Panc1 (cell line): ENCODE measurements at regions of chr16 and their contacts with region 1.

Region 1: GRCh38 chr16:84754353-84754856 is 54.6 kb downstream of the USP10 start:
- DNase-seq: no peak
- ATAC-seq: peak; percentile 94
- H3K4me3 ChIP-seq: no peak overlapping the region
- H3K27ac ChIP-seq: peak overlapping the region; percentile 29; the same call in 1 of the 2 replicates
- H3K4me1 ChIP-seq: peaks cover 15% of the 10 kb centered on the region
- H3K27me3 ChIP-seq: no peaks in the 10 kb centered on the region
- CTCF ChIP-seq: peak; percentile 80

Region 2: GRCh38 chr16:84599521-84600202 is 154.7 kb before region 1 on chr16:
- CTCF ChIA-PET with region 1: no interaction called
- POLR2A ChIA-PET with region 1: no interaction called
- in situ Hi-C with region 1: no loop called
- intact Hi-C with region 1: no loop called
- DNase-seq: no peak
- ATAC-seq: 0 out of 2 replicates have a peak, but pooled peaks have one; percentile 4
- H3K4me3 ChIP-seq: peak overlapping the region in 1 of 2 experiments; percentile 11; a peak in 1 of 4 replicates
- H3K27ac ChIP-seq: peak overlapping the region; percentile 68
- H3K4me1 ChIP-seq: peaks cover 46% of the 10 kb centered on the region
- H3K27me3 ChIP-seq: no peaks in the 10 kb centered on the region
- CTCF ChIP-seq: no peak

Region 3: GRCh38 chr16:84647828-84648594 is 106.4 kb before region 1 on chr16 and contains the start of gene KLHL36:
- CTCF ChIA-PET with region 1: no interaction called
- POLR2A ChIA-PET with region 1: interaction called, 12 read pairs
- in situ Hi-C with region 1: no loop called
- intact Hi-C with region 1: no loop called
- DNase-seq: no peak
- ATAC-seq: peak; percentile 95
- H3K4me3 ChIP-seq: peak within 1 kb of the TSS; percentile 64 to 67
- H3K27ac ChIP-seq: peak within 1 kb of the TSS; percentile 63
- H3K4me1 ChIP-seq: peaks cover 7% of the 10 kb centered on the region
- H3K27me3 ChIP-seq: no peaks in the 10 kb centered on the region
- CTCF ChIP-seq: no peak
- total RNA-seq, gene KLHL36: 46.0 TPM

Region 4: GRCh38 chr16:84712138-84712671 is 42.2 kb before region 1 on chr16:
- CTCF ChIA-PET with region 1: interaction called, 10 read pairs
- POLR2A ChIA-PET with region 1: no interaction called
- in situ Hi-C with region 1: no loop called
- intact Hi-C with region 1: no loop called
- DNase-seq: no peak
- ATAC-seq: peak; percentile 31; the same call in 1 of the 2 replicates
- H3K4me3 ChIP-seq: no peak overlapping the region
- H3K27ac ChIP-seq: no peak overlapping the region
- H3K4me1 ChIP-seq: peaks cover 12% of the 10 kb centered on the region
- H3K27me3 ChIP-seq: no peaks in the 10 kb centered on the region
- CTCF ChIP-seq: no peak

Region 5: DNA sequence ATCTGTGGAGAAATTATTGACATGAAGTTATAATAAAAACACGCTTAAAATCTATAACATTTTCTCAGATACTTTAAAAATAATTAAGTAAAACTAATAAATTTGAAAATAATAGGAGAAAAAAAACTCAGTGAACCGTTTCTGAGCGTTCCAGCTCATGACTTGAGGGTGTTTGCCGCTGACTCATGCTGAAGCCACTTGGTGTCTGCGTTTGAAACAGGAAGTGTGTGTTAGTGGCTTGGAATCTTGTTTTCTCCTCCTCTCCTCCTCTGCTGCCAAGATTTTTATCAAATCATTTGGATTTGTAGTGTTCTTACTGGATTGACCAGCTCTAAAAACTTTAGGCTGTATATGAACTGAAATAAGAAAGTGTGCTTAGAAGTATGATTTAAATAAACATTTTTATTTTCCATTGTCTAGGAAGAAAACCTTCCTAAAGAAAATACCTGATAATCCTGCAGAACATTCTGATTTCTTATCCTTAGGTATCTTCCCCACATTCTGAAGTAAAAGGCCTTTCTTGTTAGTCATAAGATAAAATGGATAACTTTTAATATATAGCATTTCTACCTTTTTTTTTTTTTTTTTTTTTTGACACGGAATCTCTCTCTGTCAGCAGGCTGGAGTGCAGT is 23.9 kb before region 1 on chr16:
- CTCF ChIA-PET with region 1: no interaction called
- POLR2A ChIA-PET with region 1: no interaction called
- in situ Hi-C with region 1: no loop called
- intact Hi-C with region 1: no loop called
- DNase-seq: no peak
- ATAC-seq: peak; percentile 87
- H3K4me3 ChIP-seq: peak overlapping the region; percentile 31 to 53
- H3K27ac ChIP-seq: peak overlapping the region; percentile 98
- H3K4me1 ChIP-seq: peaks cover 80% of the 10 kb centered on the region
- H3K27me3 ChIP-seq: no peaks in the 10 kb centered on the region
- CTCF ChIP-seq: no peak

Region 6: GRCh38 chr16:84892097-84892496 is 137.7 kb after region 1 on chr16:
- CTCF ChIA-PET with region 1: interaction called, 10 read pairs
- POLR2A ChIA-PET with region 1: no interaction called
- in situ Hi-C with region 1: no loop called
- intact Hi-C with region 1: no loop called
- DNase-seq: no peak
- ATAC-seq: no peak
- H3K4me3 ChIP-seq: no peak overlapping the region
- H3K27ac ChIP-seq: no peak overlapping the region
- H3K4me1 ChIP-seq: no peaks in the 10 kb centered on the region
- H3K27me3 ChIP-seq: no peaks in the 10 kb centered on the region
- CTCF ChIP-seq: no peak

Region 7: GRCh38 chr16:84907575-84907974 is 153.2 kb after region 1 on chr16:
- CTCF ChIA-PET with region 1: no interaction called
- POLR2A ChIA-PET with region 1: interaction called, 16 read pairs
- in situ Hi-C with region 1: no loop called
- intact Hi-C with region 1: no loop called
- DNase-seq: no peak
- ATAC-seq: no peak
- H3K4me3 ChIP-seq: no peak overlapping the region
- H3K27ac ChIP-seq: no peak overlapping the region
- H3K4me1 ChIP-seq: no peaks in the 10 kb centered on the region
- H3K27me3 ChIP-seq: no peaks in the 10 kb centered on the region
- CTCF ChIP-seq: no peak

Region 8: DNA sequence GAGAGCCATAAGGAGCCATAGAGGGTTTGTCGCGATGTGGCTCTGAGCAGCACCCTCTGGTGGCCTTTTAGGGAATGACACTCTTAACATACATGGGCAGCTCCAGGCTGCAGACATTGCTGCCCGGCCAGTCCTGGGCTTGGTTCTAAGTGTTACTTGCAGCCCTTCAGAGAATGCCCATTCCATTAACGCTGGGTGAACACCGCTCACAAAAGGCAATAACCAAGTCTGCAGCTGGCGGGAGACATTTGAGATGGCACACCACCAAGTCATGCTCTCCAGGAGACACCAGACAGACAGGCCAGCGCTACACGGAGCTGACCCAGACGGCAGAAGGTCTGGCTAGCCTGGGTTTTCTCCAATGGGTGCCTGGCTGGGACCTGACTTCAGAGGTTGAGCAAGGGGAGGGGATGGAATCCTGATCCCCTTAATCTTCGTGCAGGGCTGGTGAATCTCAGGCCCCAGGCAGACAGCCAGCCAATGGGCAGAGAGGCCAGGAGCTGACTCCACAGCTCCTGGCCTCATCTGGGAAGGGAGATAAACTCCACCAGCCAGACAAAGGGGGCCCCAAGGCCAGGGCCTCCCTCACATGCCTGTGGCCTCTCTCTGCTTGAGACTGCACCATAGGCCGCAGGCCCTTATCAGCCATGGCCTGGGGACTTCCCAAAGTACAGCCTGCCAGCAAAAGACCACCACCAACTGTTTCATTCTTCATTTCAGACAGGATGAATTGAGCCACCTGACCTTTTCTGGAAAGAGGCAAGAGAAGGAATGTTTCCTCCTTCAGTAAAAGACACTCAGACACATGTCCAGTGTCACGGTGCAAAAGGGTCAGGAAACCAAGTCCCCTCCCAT is 198.2 kb after region 1 on chr16:
- CTCF ChIA-PET with region 1: interaction called, 12 read pairs
- POLR2A ChIA-PET with region 1: no interaction called
- in situ Hi-C with region 1: no loop called
- intact Hi-C with region 1: loop called (anchors 5 kb)
- DNase-seq: peak; percentile 61
- ATAC-seq: peak; percentile 97
- H3K4me3 ChIP-seq: no peak overlapping the region
- H3K27ac ChIP-seq: no peak overlapping the region
- H3K4me1 ChIP-seq: no peaks in the 10 kb centered on the region
- H3K27me3 ChIP-seq: no peaks in the 10 kb centered on the region
- CTCF ChIP-seq: peak; percentile 86

Region 9: DNA sequence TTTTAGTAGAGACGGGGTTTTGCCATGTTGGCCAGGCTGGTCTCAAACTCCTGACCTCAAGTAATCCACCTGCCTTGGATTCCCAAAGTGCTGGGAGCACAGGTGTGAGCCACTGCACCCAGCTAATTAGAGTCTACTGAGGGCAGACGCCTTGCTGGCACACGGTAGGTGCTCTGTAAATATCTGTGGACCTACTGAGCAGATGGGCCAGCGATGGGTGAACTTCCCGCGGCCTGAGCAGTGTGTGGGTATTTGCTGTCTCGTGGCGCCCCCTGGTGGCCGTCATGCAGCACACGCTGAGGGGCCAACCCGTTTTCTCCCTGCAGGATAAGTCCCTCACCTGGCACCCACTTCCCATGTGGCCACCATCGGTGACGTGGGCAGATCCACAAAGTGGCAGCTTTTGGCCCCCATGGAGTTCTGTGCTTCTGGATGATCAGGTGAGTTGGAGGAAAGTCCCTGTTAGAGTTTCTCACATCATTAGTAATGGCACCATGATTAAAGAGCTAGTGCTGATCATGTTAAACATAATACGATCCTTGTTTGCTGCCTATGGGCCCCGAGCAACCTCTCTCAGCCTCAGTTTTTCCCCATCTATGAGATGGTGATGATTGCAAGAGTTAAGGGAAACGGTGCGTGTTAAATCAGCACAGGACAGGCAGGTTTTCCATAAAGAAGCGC is 216.2 kb after region 1 on chr16:
- CTCF ChIA-PET with region 1: interaction called, 6 read pairs
- POLR2A ChIA-PET with region 1: no interaction called
- in situ Hi-C with region 1: no loop called
- intact Hi-C with region 1: loop called (anchors 5 kb)
- DNase-seq: peak; percentile 52
- ATAC-seq: peak; percentile 93
- H3K4me3 ChIP-seq: no peak overlapping the region
- H3K27ac ChIP-seq: no peak overlapping the region
- H3K4me1 ChIP-seq: 0 out of 2 replicates have a peak, but pooled peaks cover 5% of the 10 kb centered on the region
- H3K27me3 ChIP-seq: no peaks in the 10 kb centered on the region
- CTCF ChIP-seq: peak; percentile 88